Activated CD4-positive, alpha-beta T cell treated with anti-CD3 and anti-CD28 coated beads for 36 hours (primary cell): ENCODE measurements at regions of chr3 and their contacts with region 1.

Region 1: GRCh38 chr3:69161587-69162307 is 39.4 kb upstream of the LMOD3 start:
- DNase-seq: peak; percentile 38
- ATAC-seq: peak; percentile 65
- H3K4me3 Mint-ChIP-seq: no peak overlapping the region
- H3K27ac Mint-ChIP-seq: no peak overlapping the region
- H3K4me1 Mint-ChIP-seq: peaks cover 16% of the 10 kb centered on the region
- H3K27me3 Mint-ChIP-seq: no peaks in the 10 kb centered on the region

Region 2: DNA sequence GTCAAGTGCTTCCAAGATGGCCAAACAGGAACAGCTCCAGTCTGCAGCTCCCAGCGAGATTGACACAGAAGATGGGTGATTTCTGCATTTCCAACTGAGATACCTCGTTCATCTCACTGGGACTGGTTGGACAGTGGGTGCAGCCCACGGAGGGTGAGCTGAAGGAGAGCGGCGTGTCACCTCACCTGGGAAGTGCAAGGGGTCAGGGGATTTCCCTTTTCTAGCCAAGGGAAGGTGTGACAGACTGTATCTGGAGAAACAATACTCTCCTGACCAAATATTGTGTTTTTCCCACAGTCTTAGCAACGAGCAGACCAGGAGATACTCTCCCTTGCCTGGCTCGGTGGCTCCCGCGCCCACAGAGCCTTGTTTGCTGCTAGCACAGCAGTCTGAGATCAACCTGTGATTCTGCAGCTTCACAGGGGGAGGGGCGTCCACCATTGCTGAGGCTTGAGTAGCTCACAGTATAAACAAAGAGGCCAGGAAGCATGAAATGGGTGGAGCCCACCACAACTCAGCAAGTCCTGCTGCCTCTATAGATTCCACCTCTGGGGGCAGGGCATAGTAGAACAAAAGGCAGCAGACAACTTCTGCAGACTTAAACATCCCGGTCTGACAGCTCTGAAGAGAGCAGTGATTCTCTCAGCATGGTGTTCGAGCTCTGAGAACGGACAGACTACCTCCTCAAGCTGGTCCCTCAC is 1213.8 kb before region 1 on chr3:
- CTCF ChIA-PET with region 1: no interaction called
- POLR2A ChIA-PET with region 1: no interaction called
- intact Hi-C with region 1: no loop called
- DNase-seq: peak; percentile 58
- ATAC-seq: peak; percentile 57
- H3K4me3 Mint-ChIP-seq: peak overlapping the region; percentile 16
- H3K27ac Mint-ChIP-seq: no peak overlapping the region
- H3K4me1 Mint-ChIP-seq: peaks cover 27% of the 10 kb centered on the region
- H3K27me3 Mint-ChIP-seq: no peaks in the 10 kb centered on the region

Region 3: DNA sequence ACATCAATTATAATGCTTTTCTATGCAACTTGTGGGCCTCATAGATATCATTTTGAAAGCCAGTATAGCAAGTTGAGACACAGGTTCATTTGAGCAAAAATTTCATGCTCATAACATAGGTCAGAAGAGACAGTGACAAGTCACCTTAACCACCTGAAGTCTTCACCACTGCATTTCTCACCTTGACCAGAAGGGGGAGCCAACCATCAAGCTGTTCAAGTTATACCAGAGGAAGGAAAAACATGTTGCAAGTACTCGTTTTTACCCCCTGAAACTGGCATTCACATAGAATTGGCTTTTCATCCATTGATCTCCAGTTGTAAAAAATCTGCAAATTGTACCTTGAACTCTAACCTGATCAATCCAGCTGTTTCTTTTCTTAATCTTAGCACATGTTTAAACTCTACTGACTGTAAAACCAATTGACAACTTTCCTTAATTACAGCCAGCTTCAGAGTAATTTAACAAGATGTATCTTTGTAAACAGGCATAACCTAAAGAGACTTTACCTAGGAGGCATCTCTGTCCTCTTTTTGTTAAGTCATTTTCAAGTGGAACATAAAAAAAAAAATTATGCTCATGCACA is 40.8 kb before region 1 on chr3:
- CTCF ChIA-PET with region 1: interaction called, 55 read pairs
- POLR2A ChIA-PET with region 1: no interaction called
- intact Hi-C with region 1: loop called (anchors 1 kb)
- DNase-seq: peak; percentile 89
- ATAC-seq: peak; percentile 78
- H3K4me3 Mint-ChIP-seq: no peak overlapping the region
- H3K27ac Mint-ChIP-seq: no peak overlapping the region
- H3K4me1 Mint-ChIP-seq: peaks cover 3% of the 10 kb centered on the region
- H3K27me3 Mint-ChIP-seq: no peaks in the 10 kb centered on the region

Region 4: DNA sequence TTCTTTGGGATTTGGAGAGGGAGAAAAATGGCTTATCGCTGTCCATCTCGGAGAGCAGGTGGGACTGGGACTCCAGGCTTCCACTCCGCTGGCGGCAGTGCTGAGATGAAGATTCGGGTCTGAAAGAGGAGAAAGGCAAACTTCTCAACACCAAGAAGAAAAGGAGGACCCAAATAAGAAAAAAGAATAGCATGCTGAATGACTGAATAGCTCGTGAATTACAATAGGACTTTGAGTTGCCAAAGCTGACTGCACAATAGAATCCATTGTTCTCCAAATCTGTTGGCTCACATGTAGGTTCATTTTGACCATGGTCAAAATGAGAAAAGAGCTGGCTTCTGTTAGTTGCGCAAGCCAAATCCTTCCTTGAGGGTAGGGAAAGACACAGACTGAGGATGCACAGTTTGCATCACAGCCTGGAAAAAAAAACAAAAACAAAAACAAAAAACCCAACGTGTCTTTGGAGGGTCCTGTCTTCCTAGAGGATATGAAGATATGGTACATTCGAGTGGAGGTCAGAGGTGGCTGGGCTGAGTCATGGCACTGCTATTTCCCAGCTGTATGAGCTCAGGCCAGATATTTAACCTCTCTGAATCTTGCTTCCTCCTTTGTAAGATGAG is 20.0 kb after region 1 on chr3:
- CTCF ChIA-PET with region 1: interaction called, 26 read pairs
- POLR2A ChIA-PET with region 1: interaction called, 3 read pairs
- intact Hi-C with region 1: no loop called
- DNase-seq: no peak
- ATAC-seq: no peak
- H3K4me3 Mint-ChIP-seq: no peak overlapping the region
- H3K27ac Mint-ChIP-seq: no peak overlapping the region
- H3K4me1 Mint-ChIP-seq: peaks cover 17% of the 10 kb centered on the region
- H3K27me3 Mint-ChIP-seq: no peaks in the 10 kb centered on the region

Region 5: DNA sequence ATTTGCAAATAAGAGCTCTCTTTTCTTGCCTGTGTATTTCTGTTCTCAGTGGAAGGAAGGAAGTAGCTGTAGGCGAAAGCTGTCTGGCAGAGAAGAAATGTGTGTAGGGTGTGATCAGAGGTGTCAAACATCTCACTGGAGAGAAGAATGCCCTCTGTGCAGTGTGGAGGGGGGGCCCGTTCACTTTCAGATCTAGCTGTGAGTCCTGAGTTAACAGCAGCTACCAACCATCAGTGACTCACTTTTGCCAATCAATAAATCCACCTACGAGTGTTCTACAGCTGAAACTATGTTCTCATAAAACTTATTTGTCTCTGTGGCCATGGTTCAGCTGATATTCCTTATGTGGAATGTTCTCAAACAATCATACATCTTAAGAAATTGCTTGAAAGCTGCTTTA is 120.4 kb after region 1 on chr3:
- CTCF ChIA-PET with region 1: interaction called, 16 read pairs
- POLR2A ChIA-PET with region 1: no interaction called
- intact Hi-C with region 1: no loop called
- DNase-seq: peak; percentile 83
- ATAC-seq: peak; percentile 100
- H3K4me3 Mint-ChIP-seq: no peak overlapping the region
- H3K27ac Mint-ChIP-seq: peak overlapping the region; percentile 52
- H3K4me1 Mint-ChIP-seq: peaks cover 26% of the 10 kb centered on the region
- H3K27me3 Mint-ChIP-seq: peaks cover under 1% of the 10 kb centered on the region

Region 6: DNA sequence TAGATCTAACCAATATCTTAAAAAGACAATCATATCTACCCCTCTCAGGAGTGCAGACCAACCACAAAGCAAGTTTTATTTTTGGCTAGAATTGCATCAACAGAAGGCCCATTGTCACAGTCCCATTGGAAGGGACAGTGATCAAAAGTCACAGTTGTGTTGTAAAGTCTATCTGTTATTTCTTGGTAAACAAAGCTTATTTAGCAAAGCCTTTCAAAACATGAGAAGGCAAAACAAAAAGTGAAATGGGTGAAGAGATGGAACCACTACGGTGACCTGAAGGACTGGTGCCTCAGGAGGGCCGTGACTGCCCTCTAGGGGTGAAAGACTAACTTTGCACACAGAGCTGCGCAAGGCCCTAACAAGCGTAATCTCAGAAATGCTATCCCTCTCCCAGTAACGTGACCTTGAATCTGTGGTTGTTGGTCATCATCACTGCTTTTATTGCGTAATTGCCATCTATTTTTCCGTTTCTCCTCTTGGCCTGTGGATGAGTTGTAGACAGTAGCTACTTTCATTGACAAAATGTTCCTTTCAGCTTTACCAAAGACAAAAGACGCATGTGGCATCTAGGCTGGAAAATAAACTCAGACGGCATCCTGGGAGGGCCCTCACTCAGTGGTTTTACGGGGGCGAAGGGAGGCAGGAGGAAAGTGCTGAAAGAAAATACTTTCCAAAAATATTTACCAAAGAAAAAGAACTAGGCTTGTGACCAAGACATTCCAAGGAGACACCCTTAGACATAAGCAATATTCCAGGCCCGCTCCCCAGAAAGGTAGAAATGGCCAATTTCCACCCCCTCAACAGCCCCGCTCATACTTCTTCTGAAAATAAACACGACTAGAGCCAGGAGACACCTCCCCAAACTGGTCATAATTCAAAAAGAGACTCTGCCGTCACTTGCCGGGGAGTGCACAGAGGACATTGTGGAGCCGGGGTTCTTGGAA is 144.8 kb after region 1 on chr3:
- CTCF ChIA-PET with region 1: interaction called, 309 read pairs
- POLR2A ChIA-PET with region 1: interaction called, 5 read pairs
- intact Hi-C with region 1: loop called (anchors 1 kb)
- DNase-seq: peak; percentile 83
- ATAC-seq: peak; percentile 89
- H3K4me3 Mint-ChIP-seq: no peak overlapping the region
- H3K27ac Mint-ChIP-seq: no peak overlapping the region
- H3K4me1 Mint-ChIP-seq: peaks cover 21% of the 10 kb centered on the region
- H3K27me3 Mint-ChIP-seq: no peaks in the 10 kb centered on the region

Region 7: GRCh38 chr3:69385723-69386555 is 224.2 kb after region 1 on chr3 and contains the start of gene FRMD4B:
- CTCF ChIA-PET with region 1: interaction called, 12 read pairs
- POLR2A ChIA-PET with region 1: no interaction called
- intact Hi-C with region 1: no loop called
- DNase-seq: peak; percentile 59
- ATAC-seq: peak; percentile 69
- H3K4me3 Mint-ChIP-seq: peak within 1 kb of the TSS; percentile 30
- H3K27ac Mint-ChIP-seq: no peak within 1 kb of the TSS
- H3K4me1 Mint-ChIP-seq: peaks cover 11% of the 10 kb centered on the region
- H3K27me3 Mint-ChIP-seq: peaks cover 47% of the 10 kb centered on the region
- total RNA-seq, gene FRMD4B: 8.0 to 8.3 TPM

Region 8: DNA sequence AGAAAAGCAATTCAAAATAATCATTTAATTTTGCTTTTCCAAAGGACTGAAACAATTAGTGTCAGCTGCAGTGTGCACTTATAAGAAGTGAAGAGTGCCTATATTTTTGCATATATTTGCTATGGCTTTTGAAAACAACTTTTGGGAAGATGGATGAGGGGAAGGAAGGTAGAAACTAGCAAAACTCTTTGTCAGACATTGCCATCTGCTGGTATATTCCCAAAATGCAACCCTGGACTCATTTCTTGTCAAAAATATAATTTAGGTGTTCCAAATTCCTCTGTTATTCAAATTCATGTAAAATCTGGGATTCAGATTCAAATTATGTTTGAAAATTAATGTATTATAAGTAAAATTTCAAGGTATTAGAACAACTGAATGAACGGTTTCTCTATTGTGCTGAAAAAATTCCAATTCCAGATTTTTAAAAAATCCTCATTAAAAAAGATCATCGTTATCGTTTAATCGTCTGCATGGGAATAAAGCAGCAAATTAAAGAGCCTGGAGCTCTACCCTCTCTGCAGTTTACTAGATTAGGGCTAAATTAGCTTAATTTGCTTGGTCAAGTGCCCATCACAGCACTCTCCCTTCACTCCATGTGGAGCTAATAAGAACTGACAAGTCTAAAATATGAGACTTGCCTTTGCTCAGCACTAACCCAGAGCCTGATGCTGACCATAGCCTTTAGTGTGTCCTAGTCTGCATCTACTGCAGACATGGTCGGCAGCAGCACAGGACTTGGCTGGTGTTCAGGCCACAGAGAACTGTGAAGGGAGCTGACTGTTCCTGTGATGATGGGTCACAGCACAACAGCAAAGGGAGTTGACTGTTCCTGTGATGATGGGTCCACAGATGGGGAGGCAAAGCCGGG is 509.6 kb after region 1 on chr3:
- CTCF ChIA-PET with region 1: interaction called, 6 read pairs
- POLR2A ChIA-PET with region 1: no interaction called
- intact Hi-C with region 1: loop called in 1 of 2 experiments (anchors 2 kb)
- DNase-seq: peak; percentile 11
- ATAC-seq: no peak
- H3K4me3 Mint-ChIP-seq: no peak overlapping the region
- H3K27ac Mint-ChIP-seq: no peak overlapping the region
- H3K4me1 Mint-ChIP-seq: no peaks in the 10 kb centered on the region
- H3K27me3 Mint-ChIP-seq: no peaks in the 10 kb centered on the region

Region 9: DNA sequence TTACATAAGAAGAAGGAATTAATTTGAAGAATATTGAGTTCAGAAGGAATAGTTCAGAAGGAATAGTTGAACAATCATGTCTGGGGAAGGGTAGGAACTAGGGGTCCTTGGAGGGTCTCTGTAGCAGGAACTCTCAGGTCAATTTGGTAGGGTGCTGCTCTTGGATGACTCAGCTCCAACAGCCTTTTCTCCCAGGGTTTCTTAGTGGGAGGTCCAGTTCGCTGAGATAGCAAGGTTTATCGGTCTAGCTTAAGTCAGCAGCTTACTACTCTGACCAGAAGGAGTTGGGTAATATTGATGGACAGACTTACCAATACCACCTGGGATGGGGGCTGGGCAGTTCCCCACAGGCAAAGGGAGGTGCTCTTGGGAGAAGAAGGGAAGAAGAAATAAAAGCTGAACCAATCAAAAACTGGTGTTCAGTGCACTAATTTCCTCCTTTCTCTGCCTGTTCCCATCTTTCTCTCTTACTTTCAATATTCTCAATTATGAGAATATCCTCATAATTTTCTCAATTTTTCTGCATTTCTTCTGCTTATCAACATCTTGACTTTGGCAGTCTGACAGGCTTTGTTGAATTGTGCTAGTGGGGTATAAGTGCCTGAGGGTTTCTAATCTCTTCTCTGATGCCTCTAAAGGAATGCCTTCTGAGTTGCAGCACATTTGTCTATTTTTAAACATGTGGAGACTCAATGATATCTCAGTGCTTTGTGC is 563.1 kb after region 1 on chr3:
- CTCF ChIA-PET with region 1: no interaction called
- POLR2A ChIA-PET with region 1: no interaction called
- intact Hi-C with region 1: no loop called
- DNase-seq: no peak
- ATAC-seq: no peak
- H3K4me3 Mint-ChIP-seq: no peak overlapping the region
- H3K27ac Mint-ChIP-seq: no peak overlapping the region
- H3K4me1 Mint-ChIP-seq: no peaks in the 10 kb centered on the region
- H3K27me3 Mint-ChIP-seq: peaks cover 7% of the 10 kb centered on the region